AG04450 (cell line): ENCODE measurements at regions of chr7 and their contacts with region 1.

Region 1: GRCh38 chr7:131040467-131040932 is 287.2 kb upstream of the MKLN1 start:
- DNase-seq: peak; percentile 48
- H3K4me3 ChIP-seq: no peak overlapping the region
- H3K27ac ChIP-seq: no peak overlapping the region
- H3K27me3 ChIP-seq: no peaks in the 10 kb centered on the region
- CTCF ChIP-seq: peak; percentile 94

Region 2: GRCh38 chr7:130881091-130881798 is 159.3 kb before region 1 on chr7:
- CTCF ChIA-PET with region 1: interaction called, 12 read pairs
- POLR2A ChIA-PET with region 1: no interaction called
- DNase-seq: no peak
- H3K4me3 ChIP-seq: no peak overlapping the region
- H3K27ac ChIP-seq: peak overlapping the region; percentile 57
- H3K27me3 ChIP-seq: no peaks in the 10 kb centered on the region
- CTCF ChIP-seq: no peak

Region 3: DNA sequence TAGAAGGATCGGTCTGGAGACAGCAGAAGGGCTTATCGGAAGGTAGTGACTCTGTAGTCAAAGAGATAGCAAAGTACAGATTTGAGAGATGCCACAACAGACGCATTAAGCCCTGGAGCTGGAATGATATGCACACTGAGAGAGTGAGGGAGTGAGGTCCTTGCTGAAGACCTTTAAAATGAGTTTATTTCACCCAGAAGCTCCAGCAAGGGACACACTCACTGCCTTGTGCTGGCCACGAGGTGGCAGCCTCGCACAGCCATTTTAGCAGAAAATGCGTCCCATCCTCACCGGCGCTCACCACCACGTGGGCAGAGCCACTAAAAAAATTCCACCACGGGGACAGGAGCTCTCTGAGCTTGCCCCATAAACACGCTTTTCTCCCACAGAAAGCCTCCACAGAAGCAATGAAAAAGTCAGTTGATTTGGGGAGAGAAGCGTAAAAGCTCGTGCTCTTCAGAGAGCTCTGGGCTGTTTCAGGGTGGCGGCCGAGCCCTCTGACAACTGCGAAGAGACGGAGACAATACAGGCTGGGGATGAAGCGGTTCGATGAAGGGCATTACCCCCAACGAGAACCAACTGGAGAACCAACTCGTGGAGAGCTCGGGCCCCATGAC is 143.5 kb before region 1 on chr7:
- CTCF ChIA-PET with region 1: interaction called, 91 read pairs
- POLR2A ChIA-PET with region 1: interaction called, 8 read pairs
- DNase-seq: no peak
- H3K4me3 ChIP-seq: no peak overlapping the region
- H3K27ac ChIP-seq: peak overlapping the region; percentile 89
- H3K27me3 ChIP-seq: no peaks in the 10 kb centered on the region
- CTCF ChIP-seq: peak; percentile 81

Region 4: GRCh38 chr7:130941322-130942210 is 98.9 kb before region 1 on chr7:
- CTCF ChIA-PET with region 1: interaction called, 14 read pairs
- POLR2A ChIA-PET with region 1: interaction called, 4 read pairs
- DNase-seq: no peak
- H3K4me3 ChIP-seq: peak overlapping the region; percentile 80
- H3K27ac ChIP-seq: peak overlapping the region; percentile 97
- H3K27me3 ChIP-seq: no peaks in the 10 kb centered on the region
- CTCF ChIP-seq: no peak

Region 5: GRCh38 chr7:130982160-130982638 is 58.3 kb before region 1 on chr7:
- CTCF ChIA-PET with region 1: interaction called, 40 read pairs
- POLR2A ChIA-PET with region 1: no interaction called
- DNase-seq: no peak
- H3K4me3 ChIP-seq: no peak overlapping the region
- H3K27ac ChIP-seq: no peak overlapping the region
- H3K27me3 ChIP-seq: no peaks in the 10 kb centered on the region
- CTCF ChIP-seq: peak; percentile 78

Region 6: GRCh38 chr7:131051304-131051703 is 10.8 kb after region 1 on chr7:
- CTCF ChIA-PET with region 1: interaction called, 20 read pairs
- POLR2A ChIA-PET with region 1: no interaction called
- DNase-seq: no peak
- H3K4me3 ChIP-seq: no peak overlapping the region
- H3K27ac ChIP-seq: no peak overlapping the region
- H3K27me3 ChIP-seq: no peaks in the 10 kb centered on the region
- CTCF ChIP-seq: no peak

Region 7: GRCh38 chr7:131071786-131072504 is 31.4 kb after region 1 on chr7:
- CTCF ChIA-PET with region 1: interaction called, 11 read pairs
- POLR2A ChIA-PET with region 1: no interaction called
- DNase-seq: no peak
- H3K4me3 ChIP-seq: no peak overlapping the region
- H3K27ac ChIP-seq: no peak overlapping the region
- H3K27me3 ChIP-seq: no peaks in the 10 kb centered on the region
- CTCF ChIP-seq: peak; percentile 46